ENCODE measurements at regions of chr12 and their contacts with region 1.

Region 1: DNA sequence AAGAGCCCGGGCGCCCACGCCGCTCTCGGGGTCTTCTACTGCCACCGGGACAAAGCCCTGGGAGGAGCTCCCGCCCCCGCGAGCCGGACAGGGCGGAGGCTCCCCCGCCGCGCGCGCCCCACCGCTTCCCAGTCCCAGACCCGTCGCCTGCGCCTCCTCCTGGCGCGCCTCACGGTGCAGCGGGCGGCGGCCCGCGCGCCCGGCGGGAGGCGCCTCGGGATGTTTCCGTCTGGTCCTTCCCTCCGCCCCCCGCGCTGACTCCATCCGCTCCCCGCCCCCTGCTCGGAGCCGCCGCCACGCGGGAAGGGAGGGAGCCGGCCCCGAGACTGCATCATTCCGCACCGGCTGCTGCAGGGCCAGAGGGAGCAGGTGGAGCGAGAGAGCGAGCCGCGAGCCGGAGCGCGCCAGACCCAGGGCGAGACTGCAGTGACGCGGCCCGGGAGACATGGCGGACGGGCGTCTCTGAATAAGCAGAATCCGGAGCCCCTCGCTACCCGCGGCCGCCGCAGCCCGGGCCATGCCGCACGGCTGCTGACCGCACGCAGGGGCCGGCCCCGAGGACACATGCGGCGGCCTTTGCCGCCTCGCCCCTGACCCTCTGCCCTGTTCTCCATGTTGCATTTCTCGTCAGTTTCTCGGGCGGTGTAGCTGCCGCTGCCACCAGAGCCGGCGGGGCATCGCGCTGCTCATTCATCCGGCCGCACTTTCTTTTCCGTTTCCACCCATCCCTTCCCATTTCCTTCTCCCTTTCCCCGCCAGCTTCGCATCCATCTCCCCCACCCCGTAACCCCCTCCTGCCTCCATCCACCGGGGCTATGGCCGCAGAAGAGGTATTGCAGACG is at the start of gene BICD1:
- DNase-seq: peak; percentile 68 to 96
- H3K4me3 ChIP-seq: peak within 1 kb of the TSS; percentile 76 to 99
- H3K27ac ChIP-seq: peak within 1 kb of the TSS; percentile 86 to 95
- H3K4me1 ChIP-seq: peaks cover 0 to 5% of the 10 kb centered on the region in 2 donors
- H3K27me3 ChIP-seq: no peaks in the 10 kb centered on the region
- CTCF ChIP-seq: peak; percentile 29 to 37 (median 33)
- total RNA-seq, gene BICD1: 33.8 TPM

Region 2: DNA sequence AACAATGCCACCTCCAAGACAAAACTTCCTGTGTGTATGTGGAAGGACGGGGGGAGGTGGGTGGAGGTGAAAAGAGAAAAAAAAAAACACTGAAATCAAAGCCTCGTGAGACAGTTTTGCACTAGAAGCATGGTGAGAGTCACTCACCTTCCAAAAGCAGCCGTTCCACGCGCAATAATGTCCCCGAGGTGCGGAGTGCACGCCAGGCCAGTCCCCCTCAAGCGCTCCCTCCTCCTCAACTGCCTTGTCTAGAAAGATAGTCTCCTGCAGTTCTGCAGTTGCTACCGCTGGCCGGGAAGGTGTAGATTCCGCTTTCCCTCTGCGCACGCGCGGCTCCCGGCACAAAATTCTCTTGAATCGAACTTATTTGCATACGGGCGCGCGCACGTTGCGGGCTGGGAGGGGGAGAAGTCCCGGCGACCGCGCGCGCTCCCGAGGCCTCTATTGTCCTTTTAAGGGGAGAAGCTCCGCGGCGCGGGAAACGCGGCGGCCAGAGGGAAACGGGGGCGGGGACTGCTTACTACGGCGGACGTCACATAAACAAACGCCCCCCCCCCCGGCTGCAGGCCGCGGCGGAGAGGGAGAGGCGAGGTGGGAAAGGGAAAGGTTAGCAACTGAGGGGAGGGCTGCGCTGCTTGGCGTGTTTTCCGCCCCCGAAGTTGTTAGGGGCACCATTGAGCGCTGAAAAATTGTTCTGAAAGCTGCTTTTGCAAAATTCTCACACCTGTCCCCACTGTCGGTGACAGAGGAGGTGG is 780.7 kb before region 1 on chr12 and contains the start of gene SINHCAF:
- intact Hi-C with region 1: loop called (anchors 1 kb)
- DNase-seq: peak; percentile 99 to 100
- H3K4me3 ChIP-seq: peak within 1 kb of the TSS; percentile 86 to 91
- H3K27ac ChIP-seq: peak within 1 kb of the TSS; percentile 81 to 84
- H3K4me1 ChIP-seq: no peaks in the 10 kb centered on the region
- H3K27me3 ChIP-seq: no peaks in the 10 kb centered on the region
- CTCF ChIP-seq: no peak
- total RNA-seq, gene SINHCAF: 10.9 TPM

Region 3: DNA sequence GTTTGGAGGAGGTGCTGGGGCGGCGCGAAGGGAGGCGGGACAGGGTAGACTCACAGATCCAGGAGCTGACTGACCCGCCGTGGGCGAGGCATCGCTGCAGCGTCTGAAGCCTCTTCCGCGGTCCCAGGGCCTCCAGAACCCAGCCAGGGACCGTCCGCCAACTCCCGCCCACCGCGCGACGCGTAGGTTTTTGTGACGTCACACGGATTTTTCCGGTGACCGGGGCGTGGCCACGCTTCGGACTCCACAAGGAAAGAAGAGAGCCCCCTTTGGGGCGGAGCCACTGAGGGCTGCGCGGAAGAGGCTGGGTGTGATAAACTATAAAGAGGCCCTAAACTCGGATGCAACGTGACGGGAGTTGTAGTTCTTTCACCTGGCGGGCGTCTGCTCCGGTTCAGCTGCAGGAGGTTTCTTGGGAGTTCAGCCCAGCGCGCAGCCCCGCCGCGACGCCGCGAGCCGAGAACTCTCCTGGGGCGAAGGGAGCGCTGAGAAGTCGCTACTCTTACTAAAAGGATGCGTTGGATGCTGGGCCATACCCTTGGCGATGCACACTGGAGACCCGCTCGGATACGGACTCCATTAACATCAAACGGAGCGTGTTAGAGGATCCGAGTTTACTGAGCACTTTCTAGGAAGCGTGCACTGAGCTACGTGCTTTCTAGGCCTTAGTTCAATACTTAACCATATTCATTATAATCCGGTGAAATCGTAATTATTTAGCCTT is 377.7 kb before region 1 on chr12 and contains the start of gene AMN1:
- intact Hi-C with region 1: loop called (anchors 2 kb)
- DNase-seq: peak; percentile 99 to 100
- H3K4me3 ChIP-seq: peak within 1 kb of the TSS; percentile 56 to 84
- H3K27ac ChIP-seq: peak within 1 kb of the TSS; percentile 92 to 96
- H3K4me1 ChIP-seq: peaks cover 10 to 37% of the 10 kb centered on the region in 2 donors
- H3K27me3 ChIP-seq: no peaks in the 10 kb centered on the region
- CTCF ChIP-seq: no peak
- total RNA-seq, gene AMN1: 0.75 TPM

Region 4: DNA sequence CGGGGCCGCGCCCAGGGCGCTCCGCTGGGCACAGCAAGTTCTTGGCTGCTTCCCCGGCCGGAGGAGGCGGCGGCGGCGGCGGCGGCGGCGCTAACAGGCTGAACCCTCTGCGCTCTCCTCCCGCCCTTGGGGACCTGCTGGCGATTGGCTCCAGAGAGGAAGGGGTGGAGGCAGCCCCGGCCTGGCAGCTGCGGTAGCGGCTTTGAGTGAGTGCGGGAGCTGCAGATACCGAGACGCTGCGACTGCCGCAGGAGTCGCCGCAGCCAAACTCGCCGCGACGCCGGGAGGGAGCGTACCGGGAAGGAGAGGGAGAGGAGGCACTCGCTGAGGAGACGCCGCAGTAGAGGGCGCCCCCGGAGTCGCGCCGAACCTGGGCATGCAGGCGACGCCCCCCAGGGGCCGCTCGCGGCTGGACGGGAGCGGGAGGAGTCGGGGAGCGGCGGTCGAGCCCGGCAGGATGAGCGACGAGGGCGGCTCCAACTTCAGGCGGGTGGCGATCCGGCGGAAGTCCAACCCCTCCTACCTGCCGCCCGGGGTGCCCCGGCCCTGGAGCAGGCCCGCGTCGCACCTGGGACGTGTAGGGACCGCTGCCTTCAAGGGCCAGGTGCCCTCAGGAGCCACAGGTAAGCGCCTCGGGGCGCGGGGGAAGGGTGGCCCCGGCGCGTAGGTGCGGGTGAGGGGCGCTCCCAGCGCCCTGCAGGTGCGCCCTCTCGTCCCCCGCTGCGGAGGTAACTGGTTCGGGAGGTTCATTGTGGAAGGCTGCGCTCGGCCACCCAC is 292.8 kb after region 1 on chr12 and contains the start of gene FGD4:
- intact Hi-C with region 1: loop called (anchors 5 kb)
- DNase-seq: peak; percentile 57 to 89
- H3K4me3 ChIP-seq: peak within 1 kb of the TSS; percentile 85 to 89
- H3K27ac ChIP-seq: peak within 1 kb of the TSS; percentile 34 to 73
- H3K4me1 ChIP-seq: no peaks in the 10 kb centered on the region
- H3K27me3 ChIP-seq: no peaks in the 10 kb centered on the region
- CTCF ChIP-seq: peak in 2 of 3 experiments; percentile 37 to 52
- total RNA-seq, gene FGD4: 47.5 TPM

Region 5: DNA sequence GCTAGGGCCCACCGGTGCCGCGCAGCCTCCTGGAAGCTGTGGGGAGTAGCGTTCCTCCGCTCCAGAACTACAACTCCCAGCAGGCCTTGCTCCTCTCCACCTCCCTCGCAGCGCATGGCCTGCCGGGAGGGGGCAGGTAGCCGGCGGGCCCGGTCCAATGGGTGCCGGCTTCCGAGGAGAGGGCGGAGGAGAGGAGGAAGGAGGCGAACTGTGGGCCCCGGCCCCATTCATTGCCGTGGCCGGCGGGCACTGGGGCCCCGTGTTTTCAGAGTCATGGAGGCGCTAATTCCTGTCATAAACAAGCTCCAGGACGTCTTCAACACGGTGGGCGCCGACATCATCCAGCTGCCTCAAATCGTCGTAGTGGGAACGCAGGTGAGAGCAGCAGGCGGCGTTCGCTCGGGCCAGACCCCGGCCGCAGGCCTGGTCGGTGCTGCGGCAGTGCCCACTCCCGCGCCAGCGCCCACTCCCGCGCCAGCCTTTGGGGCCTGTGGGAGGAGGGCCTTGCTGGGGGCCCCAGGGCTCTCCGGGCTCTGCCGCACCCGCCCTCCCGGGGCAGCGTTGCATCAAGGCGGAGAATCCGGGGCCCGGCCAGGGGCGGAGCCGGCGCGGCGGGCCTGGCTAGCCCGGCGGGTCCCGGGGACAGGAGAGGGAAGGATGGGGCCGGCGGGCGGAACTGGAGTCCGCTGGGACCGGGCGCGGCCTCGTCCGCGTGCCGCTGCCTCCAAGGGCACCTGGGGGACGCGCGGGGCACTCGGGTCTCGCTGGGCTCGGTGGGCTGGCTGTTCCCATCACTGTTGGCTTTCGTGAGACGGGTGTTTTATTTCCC is 572.6 kb after region 1 on chr12 and contains the start of gene DNM1L:
- intact Hi-C with region 1: loop called (anchors 5 kb)
- DNase-seq: peak; percentile 81 to 97
- H3K4me3 ChIP-seq: peak within 1 kb of the TSS; percentile 82 to 84
- H3K27ac ChIP-seq: peak within 1 kb of the TSS; percentile 93 to 94
- H3K4me1 ChIP-seq: peaks cover 0 to 5% of the 10 kb centered on the region in 2 donors
- H3K27me3 ChIP-seq: no peaks in the 10 kb centered on the region
- CTCF ChIP-seq: no peak
- total RNA-seq, gene DNM1L: 50.9 TPM

Region 6: DNA sequence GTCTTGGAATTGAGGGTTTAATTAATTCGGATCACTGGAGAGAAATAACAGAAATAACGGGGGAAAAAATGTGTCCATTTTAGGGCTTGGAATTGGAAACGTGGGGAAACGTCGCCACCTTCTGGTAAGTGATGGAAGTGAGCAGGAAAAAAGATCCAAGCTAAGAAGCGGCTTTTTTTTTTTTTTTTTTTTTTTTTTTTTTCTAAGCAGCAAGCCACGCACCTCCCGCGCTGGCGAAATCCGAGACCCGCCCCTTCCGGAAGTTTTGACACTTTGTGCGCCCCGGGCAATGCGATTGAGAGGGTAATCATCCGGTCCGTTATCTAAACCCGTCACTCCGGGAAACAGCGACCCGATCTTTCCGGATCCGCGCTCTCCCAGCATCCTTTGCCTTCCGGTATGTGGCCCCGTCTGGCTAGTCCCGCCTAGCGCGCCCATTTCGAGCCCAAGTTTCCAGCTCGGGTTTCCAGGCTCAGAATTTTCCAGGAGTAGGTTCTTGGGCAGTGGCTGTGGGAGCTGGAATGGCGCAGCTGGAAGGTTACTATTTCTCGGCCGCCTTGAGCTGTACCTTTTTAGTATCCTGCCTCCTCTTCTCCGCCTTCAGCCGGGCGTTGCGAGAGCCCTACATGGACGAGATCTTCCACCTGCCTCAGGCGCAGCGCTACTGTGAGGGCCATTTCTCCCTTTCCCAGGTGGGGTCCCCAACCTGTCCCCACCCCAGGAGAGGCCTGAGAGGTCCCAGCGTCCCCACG is 1915.5 kb after region 1 on chr12 and contains the start of gene ALG10:
- intact Hi-C with region 1: loop called (anchors 10 kb)
- DNase-seq: peak; percentile 88 to 98
- H3K4me3 ChIP-seq: peak within 1 kb of the TSS; percentile 66 to 71
- H3K27ac ChIP-seq: peak within 1 kb of the TSS; percentile 80 to 84
- H3K4me1 ChIP-seq: peaks cover 0 to 4% of the 10 kb centered on the region in 2 donors
- H3K27me3 ChIP-seq: no peaks in the 10 kb centered on the region
- CTCF ChIP-seq: peak; percentile 55 to 72 (median 71)
- total RNA-seq, gene ALG10: 1.3 TPM

Measured in ascending aorta (tissue), 2 donors.